Right ventricle myocardium inferior (tissue), 1 donor: ENCODE measurements at regions of chr18 and their contacts with region 1.

Region 1: DNA sequence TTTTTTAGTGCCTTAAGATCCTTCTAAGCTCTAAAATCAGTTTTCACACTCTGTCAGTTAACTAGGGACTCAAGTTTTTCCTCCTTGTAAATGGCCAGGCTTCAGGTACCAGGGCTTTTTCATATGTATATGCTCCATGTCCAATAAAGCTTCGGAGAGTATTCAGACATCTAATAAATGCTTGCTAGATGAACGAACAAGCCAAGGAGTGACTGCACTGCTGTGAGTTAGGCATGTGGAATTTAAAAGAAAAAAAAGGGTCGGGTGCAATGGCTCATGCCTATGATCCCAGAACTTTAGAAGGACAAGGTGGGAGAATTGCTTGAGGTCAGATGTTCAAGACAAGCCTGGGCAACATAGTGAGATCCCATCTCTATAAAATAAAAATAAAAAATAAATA is 81.9 kb downstream of the CDH2 start:
- DNase-seq: no peak
- ATAC-seq: no peak

Region 2: GRCh38 chr18:27871726-27872125 is 223.3 kb before region 1 on chr18:
- intact Hi-C with region 1: no loop called
- DNase-seq: no peak
- ATAC-seq: no peak

Region 3: DNA sequence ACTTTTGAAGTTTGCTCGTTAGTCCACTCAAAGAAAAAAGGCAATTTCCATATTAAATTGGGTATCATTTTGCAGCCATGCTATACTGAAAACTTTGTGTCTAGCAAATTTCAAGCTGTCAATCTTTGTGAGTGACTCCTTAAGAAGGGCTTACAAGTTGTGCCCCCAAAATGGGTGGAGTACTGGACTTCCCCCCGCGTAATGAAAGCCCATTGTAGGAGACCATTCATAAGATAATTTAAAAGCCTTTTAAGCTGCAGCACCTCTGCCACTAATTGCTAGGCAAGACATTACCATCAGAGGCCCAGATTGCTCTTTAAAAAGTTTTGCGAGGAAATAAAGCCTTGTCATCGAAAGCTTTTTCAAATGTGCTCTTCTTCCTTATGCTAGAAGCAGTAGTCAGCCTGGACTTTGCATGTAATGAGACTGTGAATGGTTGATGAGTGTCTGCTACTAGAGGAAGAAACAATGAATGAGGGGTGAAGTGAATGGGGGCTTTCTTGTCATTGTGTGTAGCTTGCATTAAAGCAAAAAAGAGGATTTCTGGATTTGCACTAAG is 427.2 kb after region 1 on chr18:
- intact Hi-C with region 1: loop called (anchors 10 kb)
- DNase-seq: no peak
- ATAC-seq: no peak

Region 4: DNA sequence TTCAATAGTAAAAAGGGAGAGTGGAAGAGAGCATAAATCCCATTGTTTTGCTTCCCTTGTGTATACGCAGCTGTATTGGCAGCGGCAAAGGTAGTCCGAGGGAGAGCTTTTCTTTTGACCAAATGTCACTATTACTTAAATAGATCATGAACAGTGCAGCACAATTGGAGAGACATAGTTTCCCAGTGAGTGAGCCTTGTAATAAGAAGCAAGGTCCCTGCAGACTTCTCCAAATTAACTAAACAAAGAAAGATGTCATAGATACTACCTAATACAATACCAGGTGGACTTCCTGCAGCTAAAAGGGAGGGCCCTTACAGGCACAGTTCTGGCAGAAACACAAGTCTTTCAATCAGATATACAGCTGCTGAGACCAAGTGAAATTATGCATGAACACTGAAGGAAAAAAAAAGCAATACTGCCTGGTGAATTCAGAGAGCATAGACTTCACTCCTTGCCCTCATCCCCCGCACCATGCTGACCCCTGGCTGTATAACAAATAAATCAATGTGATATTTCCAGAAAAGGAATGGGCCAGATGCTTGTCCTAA is 486.6 kb after region 1 on chr18:
- intact Hi-C with region 1: no loop called
- DNase-seq: no peak
- ATAC-seq: no peak